ENCODE measurements at regions of chr13 and their contacts with region 1.

Region 1: GRCh38 chr13:105436943-105437342 is 1098.5 kb downstream of the EFNB2 start:
- DNase-seq: no peak
- ATAC-seq: no peak
- H3K4me3 ChIP-seq: no peak overlapping the region
- H3K4me3 Mint-ChIP-seq: no peak overlapping the region
- H3K27ac ChIP-seq: no peak overlapping the region
- H3K27ac Mint-ChIP-seq: no peak overlapping the region
- H3K4me1 ChIP-seq: no peaks in the 10 kb centered on the region
- H3K4me1 Mint-ChIP-seq: no peaks in the 10 kb centered on the region
- H3K27me3 ChIP-seq: no peaks in the 10 kb centered on the region
- H3K27me3 Mint-ChIP-seq: no peaks in the 10 kb centered on the region
- CTCF ChIP-seq: no peak

Region 2: DNA sequence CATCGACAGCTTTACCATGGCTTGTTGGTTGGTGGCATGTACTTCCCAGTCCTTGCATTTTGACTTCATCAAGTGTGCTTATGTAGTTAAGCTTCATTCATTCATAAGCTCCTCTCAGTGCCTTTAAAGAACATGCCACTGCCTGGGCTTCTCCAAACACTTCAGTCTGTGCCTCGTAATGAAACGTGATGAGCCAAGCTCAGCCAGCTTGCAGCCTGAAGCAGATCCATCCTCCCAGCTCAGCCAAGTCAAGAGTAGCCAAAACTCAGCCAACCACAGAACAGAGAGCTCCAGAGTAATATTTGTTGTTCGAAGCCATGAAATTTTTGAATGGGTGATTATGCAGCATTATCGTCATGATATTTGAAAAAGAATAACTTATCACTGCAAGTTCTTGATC is 108.9 kb after region 1 on chr13:
- CTCF ChIA-PET with region 1: no interaction called
- POLR2A ChIA-PET with region 1: no interaction called
- intact Hi-C with region 1: loop called in 1 of 2 experiments (anchors 5 kb)
- DNase-seq: no peak
- ATAC-seq: no peak
- H3K4me3 ChIP-seq: no peak overlapping the region
- H3K4me3 Mint-ChIP-seq: no peak overlapping the region
- H3K27ac ChIP-seq: no peak overlapping the region
- H3K27ac Mint-ChIP-seq: no peak overlapping the region
- H3K4me1 ChIP-seq: no peaks in the 10 kb centered on the region
- H3K4me1 Mint-ChIP-seq: no peaks in the 10 kb centered on the region
- H3K27me3 ChIP-seq: no peaks in the 10 kb centered on the region
- H3K27me3 Mint-ChIP-seq: no peaks in the 10 kb centered on the region
- CTCF ChIP-seq: no peak

Measured in CD4-positive, alpha-beta T cell (primary cell).